Activated CD8-positive, alpha-beta T cell treated with anti-CD3 and anti-CD28 coated beads for 36 hours (primary cell): ENCODE measurements at regions of chr3 and their contacts with region 1.

Region 1: DNA sequence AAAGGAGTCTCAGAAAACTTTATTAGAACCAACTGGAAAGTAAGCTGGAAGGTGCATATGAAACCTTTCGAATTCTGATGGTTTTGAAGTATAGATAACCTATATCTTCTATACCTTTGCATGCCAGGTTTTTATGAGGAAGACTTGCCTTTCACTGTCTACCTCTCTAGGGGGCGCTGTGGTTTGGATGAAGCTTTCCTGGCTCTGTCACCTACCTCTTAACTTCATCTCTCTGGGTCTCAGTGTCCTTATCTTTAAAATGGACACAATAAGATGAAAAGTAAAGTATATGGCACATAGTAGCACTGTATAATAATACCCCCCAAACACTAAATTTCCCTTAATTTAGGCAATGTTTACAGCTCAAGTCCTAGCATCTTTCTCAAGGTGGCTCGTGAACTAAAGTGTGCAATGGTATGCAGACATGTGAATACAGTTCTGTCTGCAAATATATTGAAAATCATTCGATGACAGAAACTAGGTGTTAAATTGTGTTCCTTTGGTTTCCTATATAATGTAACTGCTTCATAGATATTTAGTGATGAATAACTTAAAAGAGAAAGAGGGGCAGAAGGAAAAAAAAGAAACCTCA is 314.3 kb downstream of the CHST2 start:
- DNase-seq: peak; percentile 62
- ATAC-seq: no peak
- H3K4me3 Mint-ChIP-seq: no peak overlapping the region
- H3K27ac Mint-ChIP-seq: no peak overlapping the region
- H3K4me1 Mint-ChIP-seq: no peaks in the 10 kb centered on the region
- H3K27me3 Mint-ChIP-seq: no peaks in the 10 kb centered on the region
- CTCF ChIP-seq: peak; percentile 75

Region 2: GRCh38 chr3:143200001-143200924 is 233.6 kb before region 1 on chr3:
- CTCF ChIA-PET with region 1: no interaction called
- POLR2A ChIA-PET with region 1: no interaction called
- intact Hi-C with region 1: no loop called
- DNase-seq: no peak
- ATAC-seq: no peak
- H3K4me3 Mint-ChIP-seq: no peak overlapping the region
- H3K27ac Mint-ChIP-seq: no peak overlapping the region
- H3K4me1 Mint-ChIP-seq: no peaks in the 10 kb centered on the region
- H3K27me3 Mint-ChIP-seq: no peaks in the 10 kb centered on the region
- CTCF ChIP-seq: no peak

Region 3: GRCh38 chr3:143421556-143421955 is 12.3 kb before region 1 on chr3:
- CTCF ChIA-PET with region 1: interaction called, 36 read pairs
- POLR2A ChIA-PET with region 1: interaction called, 3 read pairs
- intact Hi-C with region 1: no loop called
- DNase-seq: no peak
- ATAC-seq: no peak
- H3K4me3 Mint-ChIP-seq: no peak overlapping the region
- H3K27ac Mint-ChIP-seq: no peak overlapping the region
- H3K4me1 Mint-ChIP-seq: peaks cover 10% of the 10 kb centered on the region
- H3K27me3 Mint-ChIP-seq: no peaks in the 10 kb centered on the region
- CTCF ChIP-seq: no peak

Region 4: DNA sequence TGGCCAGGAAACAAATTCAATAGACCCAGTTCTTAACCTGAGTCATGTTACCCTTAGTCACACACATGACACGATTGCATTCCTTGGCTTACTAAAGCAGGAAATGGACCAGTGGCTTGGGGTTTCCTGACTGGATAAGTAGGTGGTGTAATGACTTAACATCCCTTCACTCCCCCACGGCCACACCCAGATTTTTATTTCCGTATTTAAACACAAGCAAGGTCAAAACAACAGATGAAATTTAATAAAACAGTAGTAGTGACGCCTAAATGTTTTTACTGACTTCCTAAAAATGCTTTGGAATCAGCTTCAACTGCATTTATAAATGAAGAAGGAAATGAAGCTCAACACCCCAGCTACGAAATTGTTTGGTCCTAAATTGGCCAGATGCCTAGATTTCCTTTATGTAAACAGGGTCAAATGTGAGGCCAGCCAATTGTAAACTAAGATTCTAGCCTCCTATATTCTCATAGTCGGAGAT is 10.0 kb after region 1 on chr3:
- CTCF ChIA-PET with region 1: interaction called, 21 read pairs
- POLR2A ChIA-PET with region 1: no interaction called
- intact Hi-C with region 1: no loop called
- DNase-seq: peak; percentile 59
- ATAC-seq: peak; percentile 57
- H3K4me3 Mint-ChIP-seq: no peak overlapping the region
- H3K27ac Mint-ChIP-seq: no peak overlapping the region
- H3K4me1 Mint-ChIP-seq: peaks cover 31% of the 10 kb centered on the region
- H3K27me3 Mint-ChIP-seq: no peaks in the 10 kb centered on the region
- CTCF ChIP-seq: no peak

Region 5: GRCh38 chr3:143644370-143645089 is 210.6 kb after region 1 on chr3:
- CTCF ChIA-PET with region 1: interaction called, 5 read pairs
- POLR2A ChIA-PET with region 1: no interaction called
- intact Hi-C with region 1: loop called (anchors 10 kb)
- DNase-seq: peak; percentile 38
- ATAC-seq: no peak
- H3K4me3 Mint-ChIP-seq: no peak overlapping the region
- H3K27ac Mint-ChIP-seq: no peak overlapping the region
- H3K4me1 Mint-ChIP-seq: no peaks in the 10 kb centered on the region
- H3K27me3 Mint-ChIP-seq: no peaks in the 10 kb centered on the region
- CTCF ChIP-seq: peak; percentile 49

Region 6: GRCh38 chr3:143674100-143674968 is 240.5 kb after region 1 on chr3:
- CTCF ChIA-PET with region 1: interaction called, 22 read pairs
- POLR2A ChIA-PET with region 1: no interaction called
- intact Hi-C with region 1: loop called (anchors 10 kb)
- DNase-seq: peak; percentile 84
- ATAC-seq: peak; percentile 98
- H3K4me3 Mint-ChIP-seq: peak overlapping the region; percentile 65
- H3K27ac Mint-ChIP-seq: peak overlapping the region; percentile 81
- H3K4me1 Mint-ChIP-seq: peaks cover 17% of the 10 kb centered on the region
- H3K27me3 Mint-ChIP-seq: no peaks in the 10 kb centered on the region
- CTCF ChIP-seq: peak; percentile 90